H1 (cell line): ENCODE measurements at regions of chr17 and their contacts with region 1.

Region 1: GRCh38 chr17:42527273-42527703 is 8.8 kb upstream of the NAGLU start:
- DNase-seq: peak in 1 of 2 experiments; percentile 88
- H3K4me3 ChIP-seq: no peak overlapping the region
- H3K27ac ChIP-seq: no peak overlapping the region
- H3K4me1 ChIP-seq: no peaks in the 10 kb centered on the region; a peak in 1 of 7 replicates
- H3K27me3 ChIP-seq: peaks cover 0 to 6% (median 0%) of the 10 kb centered on the region in 4 experiments; a peak in 3 of 7 replicates
- CTCF ChIP-seq: peak; percentile 89 to 98 (median 96)
- EP300 ChIP-seq: no peak
- POLR2A ChIP-seq: no peak
- RAD21 ChIP-seq: peak; percentile 93 to 96

Region 2: DNA sequence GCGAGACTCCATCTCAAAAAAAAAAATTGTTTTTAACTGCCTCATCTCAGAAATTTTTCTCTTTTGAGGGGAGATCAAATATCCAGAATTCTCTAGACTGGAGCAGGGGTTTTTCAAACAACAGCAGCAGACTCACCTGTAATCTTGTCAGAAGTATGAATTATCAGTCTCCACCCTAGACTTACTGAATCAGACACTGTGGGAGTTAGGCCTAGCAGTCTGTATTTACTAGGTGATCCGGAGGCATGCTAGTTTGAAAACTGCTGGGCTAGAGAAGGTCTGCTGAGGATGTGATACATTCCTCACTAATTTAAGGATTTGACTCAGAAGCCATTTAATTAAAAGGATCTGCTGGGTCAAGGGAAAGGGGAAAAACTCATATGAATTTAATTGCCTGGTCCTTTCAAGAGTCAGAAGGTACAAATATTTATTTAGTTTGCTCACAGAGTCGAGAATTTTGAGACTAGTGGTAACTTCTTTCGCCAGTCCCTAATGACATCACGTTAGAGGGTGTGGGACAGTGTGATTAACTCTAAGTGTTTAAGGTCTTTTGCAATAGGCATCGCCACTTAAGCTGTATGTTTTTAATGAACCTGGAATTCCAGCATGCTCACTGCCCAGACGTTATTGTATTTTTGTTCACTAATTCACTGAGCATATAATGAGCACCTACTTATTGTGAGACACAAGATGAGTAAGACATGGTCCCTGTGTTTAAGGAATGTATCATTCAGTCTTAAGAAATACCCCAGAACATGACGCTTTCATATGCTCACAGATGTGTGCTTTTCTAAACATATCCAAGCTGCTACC is 54.4 kb before region 1 on chr17:
- CTCF ChIA-PET with region 1: interaction called, 11 read pairs
- POLR2A ChIA-PET with region 1: no interaction called
- DNase-seq: no peak
- H3K4me3 ChIP-seq: no peak overlapping the region
- H3K27ac ChIP-seq: no peak overlapping the region
- H3K4me1 ChIP-seq: no peaks in the 10 kb centered on the region
- H3K27me3 ChIP-seq: no peaks in the 10 kb centered on the region
- CTCF ChIP-seq: no peak
- EP300 ChIP-seq: no peak
- POLR2A ChIP-seq: no peak
- RAD21 ChIP-seq: no peak

Region 3: GRCh38 chr17:42485680-42486079 is 41.6 kb before region 1 on chr17:
- CTCF ChIA-PET with region 1: interaction called, 11 read pairs
- POLR2A ChIA-PET with region 1: no interaction called
- DNase-seq: no peak
- H3K4me3 ChIP-seq: no peak overlapping the region
- H3K27ac ChIP-seq: no peak overlapping the region
- H3K4me1 ChIP-seq: no peaks in the 10 kb centered on the region
- H3K27me3 ChIP-seq: no peaks in the 10 kb centered on the region
- CTCF ChIP-seq: no peak
- EP300 ChIP-seq: no peak
- POLR2A ChIP-seq: no peak
- RAD21 ChIP-seq: no peak

Region 4: DNA sequence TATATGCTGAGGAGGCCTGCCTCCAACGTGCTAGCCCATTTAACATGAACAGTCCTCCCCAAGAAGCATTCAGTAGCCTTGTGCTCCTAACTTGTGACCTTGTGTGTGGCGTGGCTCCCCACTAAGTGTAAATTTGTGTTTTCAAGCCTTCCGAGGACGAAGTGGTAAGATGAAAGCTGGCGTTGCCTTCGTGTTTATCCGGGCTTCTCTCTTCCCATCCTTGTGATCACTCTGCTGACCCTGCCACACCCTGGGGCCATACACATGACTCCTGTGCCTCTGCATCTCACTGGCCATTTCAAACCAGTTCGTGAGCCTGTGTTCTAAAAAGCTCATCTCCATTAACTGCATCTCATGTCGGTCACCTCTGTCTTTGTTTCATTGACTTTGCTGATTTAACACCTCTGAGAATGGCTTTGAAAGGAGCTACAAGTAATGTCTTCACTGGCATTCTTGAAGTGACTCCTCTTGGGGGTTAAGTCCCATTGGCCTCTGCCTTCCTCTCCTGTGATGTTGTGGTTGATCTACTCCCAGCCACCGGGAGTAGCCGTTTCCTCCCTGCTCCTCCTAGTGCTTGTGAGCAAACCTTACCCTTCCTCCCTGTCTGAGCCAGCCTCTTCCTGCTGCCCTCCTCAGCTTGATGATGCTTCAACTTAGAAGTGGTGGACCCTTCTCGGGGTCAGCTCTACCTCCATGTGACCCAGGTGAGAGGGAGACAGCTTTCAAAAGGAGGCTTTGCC is 18.7 kb before region 1 on chr17:
- CTCF ChIA-PET with region 1: interaction called, 10 read pairs
- POLR2A ChIA-PET with region 1: interaction called, 3 read pairs
- DNase-seq: no peak
- H3K4me3 ChIP-seq: no peak overlapping the region
- H3K27ac ChIP-seq: no peak overlapping the region
- H3K4me1 ChIP-seq: no peaks in the 10 kb centered on the region
- H3K27me3 ChIP-seq: no peaks in the 10 kb centered on the region
- CTCF ChIP-seq: no peak
- EP300 ChIP-seq: no peak
- POLR2A ChIP-seq: no peak
- RAD21 ChIP-seq: no peak